Activated naive CD8-positive, alpha-beta T cell treated with anti-CD3 and anti-CD28 coated beads, Interleukin-2, amount 10 ng/mL, durations not matched to agents 7 days and 5 days (primary cell): ENCODE measurements at regions of chr22 and their contacts with region 1.

Region 1: DNA sequence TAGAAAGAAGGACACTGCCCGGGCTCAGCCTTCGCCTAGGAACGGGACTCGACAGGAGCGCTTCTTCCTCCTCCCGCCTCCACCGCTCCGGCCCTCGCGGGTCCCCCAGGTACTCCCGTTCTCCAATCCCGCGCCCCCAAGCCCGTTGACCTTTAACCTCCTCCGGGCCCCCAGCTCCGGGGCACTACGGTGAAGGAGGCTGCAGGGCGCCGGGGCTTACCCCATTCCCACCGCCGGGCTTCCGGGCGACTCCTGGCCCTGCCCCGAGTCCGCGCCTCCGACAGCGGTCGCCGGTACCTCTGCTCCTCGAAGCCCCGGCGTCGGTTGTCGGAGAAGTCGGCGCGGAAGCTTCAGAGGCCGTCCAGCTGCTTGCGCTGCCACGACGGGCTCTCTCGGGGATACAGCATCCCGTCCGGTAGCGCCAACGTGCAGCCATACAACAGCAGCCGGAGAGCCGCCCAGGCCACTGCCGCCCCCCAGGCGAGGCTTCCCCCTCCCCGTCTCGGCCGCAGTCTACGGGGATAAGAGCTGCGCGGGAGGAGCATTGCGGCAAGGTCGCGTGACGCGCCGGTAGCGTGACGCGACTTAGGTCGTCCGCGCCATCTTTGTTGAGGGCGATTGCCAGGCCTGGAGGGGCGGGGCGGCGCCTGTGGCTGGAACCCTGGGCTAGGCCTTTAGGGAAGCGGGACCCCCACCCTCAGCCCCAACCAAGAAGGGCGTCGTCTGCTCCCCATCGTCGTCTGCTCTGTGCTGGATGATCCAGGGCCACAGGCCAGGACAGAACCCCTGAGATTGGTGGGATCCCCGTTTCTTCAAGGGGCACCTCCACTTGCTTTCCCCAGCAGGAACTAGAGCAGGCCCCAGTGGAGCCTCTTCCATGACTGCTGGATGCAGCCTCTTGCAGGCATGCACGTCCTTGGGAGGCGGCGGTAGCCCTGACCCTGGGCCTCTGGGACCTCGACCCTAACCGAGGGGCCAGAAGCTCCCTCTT is 26.3 kb downstream of the RGL4 start:
- DNase-seq: peak; percentile 88
- ATAC-seq: peak; percentile 88
- H3K4me3 Mint-ChIP-seq: peak overlapping the region; percentile 80
- H3K27ac Mint-ChIP-seq: peak overlapping the region; percentile 84
- H3K4me1 Mint-ChIP-seq: peaks cover 8% of the 10 kb centered on the region
- H3K27me3 Mint-ChIP-seq: no peaks in the 10 kb centered on the region

Region 2: GRCh38 chr22:23608583-23608982 is 108.5 kb before region 1 on chr22:
- POLR2A ChIA-PET with region 1: no interaction called
- DNase-seq: peak; percentile 45
- ATAC-seq: no peak
- H3K4me3 Mint-ChIP-seq: no peak overlapping the region
- H3K27ac Mint-ChIP-seq: no peak overlapping the region
- H3K4me1 Mint-ChIP-seq: peaks cover 25% of the 10 kb centered on the region
- H3K27me3 Mint-ChIP-seq: peaks cover 8% of the 10 kb centered on the region

Region 3: GRCh38 chr22:23696326-23696851 is 20.7 kb before region 1 on chr22:
- POLR2A ChIA-PET with region 1: interaction called, 19 read pairs
- DNase-seq: peak; percentile 76
- ATAC-seq: peak; percentile 99
- H3K4me3 Mint-ChIP-seq: peak overlapping the region; percentile 98
- H3K27ac Mint-ChIP-seq: peak overlapping the region; percentile 100
- H3K4me1 Mint-ChIP-seq: peaks cover 39% of the 10 kb centered on the region
- H3K27me3 Mint-ChIP-seq: no peaks in the 10 kb centered on the region

Region 4: GRCh38 chr22:23706631-23707030 is 10.5 kb before region 1 on chr22:
- POLR2A ChIA-PET with region 1: no interaction called
- DNase-seq: no peak
- ATAC-seq: no peak
- H3K4me3 Mint-ChIP-seq: no peak overlapping the region
- H3K27ac Mint-ChIP-seq: no peak overlapping the region
- H3K4me1 Mint-ChIP-seq: peaks cover 41% of the 10 kb centered on the region
- H3K27me3 Mint-ChIP-seq: no peaks in the 10 kb centered on the region

Region 5: DNA sequence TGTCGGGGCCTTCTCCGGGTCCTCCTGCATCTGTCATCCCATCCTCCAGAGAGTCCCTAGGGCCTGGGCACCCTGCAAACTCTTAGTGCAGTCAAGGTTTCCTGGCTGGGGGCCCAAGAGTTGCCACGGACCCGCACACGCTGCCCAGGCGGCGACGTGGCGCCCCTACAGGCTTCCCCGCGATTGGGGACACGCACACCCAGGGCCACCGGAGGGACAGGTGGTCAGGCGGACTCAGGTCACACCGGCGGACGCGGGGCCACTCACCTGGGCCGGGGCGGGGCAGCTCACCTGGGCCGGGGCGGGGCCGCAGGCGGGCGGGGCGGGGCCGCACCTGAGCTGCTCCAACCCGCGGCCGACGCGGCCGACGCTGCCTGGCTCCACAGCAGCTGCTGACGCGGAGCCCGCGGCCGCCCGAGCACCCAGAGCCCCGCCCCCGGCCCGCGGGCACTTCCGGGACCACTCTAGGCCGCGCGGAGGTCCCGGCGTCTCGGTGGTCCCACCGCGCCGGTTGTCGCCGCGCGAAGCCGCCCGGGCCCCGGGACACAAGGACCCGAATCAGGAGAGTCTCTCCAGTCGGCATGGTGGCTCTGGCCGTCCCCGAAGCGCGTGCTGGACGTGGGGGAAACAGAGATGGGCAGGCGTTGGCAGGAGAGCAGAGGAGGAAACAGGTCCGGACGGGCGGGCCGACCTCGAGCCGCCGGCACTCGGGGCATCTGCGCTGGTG is 33.8 kb after region 1 on chr22 and contains the start of gene ZNF70:
- POLR2A ChIA-PET with region 1: interaction called, 16 read pairs
- DNase-seq: peak; percentile 95
- ATAC-seq: peak; percentile 99
- H3K4me3 Mint-ChIP-seq: peak within 1 kb of the TSS; percentile 83
- H3K27ac Mint-ChIP-seq: peak within 1 kb of the TSS; percentile 79
- H3K4me1 Mint-ChIP-seq: peaks cover 12% of the 10 kb centered on the region
- H3K27me3 Mint-ChIP-seq: no peaks in the 10 kb centered on the region
- total RNA-seq, gene ZNF70: 3.8 to 4.1 TPM